Naive thymus-derived CD4-positive, alpha-beta T cell (primary cell): ENCODE measurements at regions of chr2 and their contacts with region 1.

Region 1: GRCh38 chr2:113080134-113080533 is 12.4 kb downstream of the IL1F10 start:
- DNase-seq: peak in 7 of 9 donors; percentile 26 to 55 (median 35)
- ATAC-seq: peak; percentile 69
- H3K4me3 ChIP-seq: no peak overlapping the region
- H3K4me3 Mint-ChIP-seq: no peak overlapping the region
- H3K27ac ChIP-seq: no peak overlapping the region
- H3K27ac Mint-ChIP-seq: no peak overlapping the region
- H3K4me1 ChIP-seq: no peaks in the 10 kb centered on the region
- H3K4me1 Mint-ChIP-seq: peaks cover 2 to 13% (median 4%) of the 10 kb centered on the region in 7 donors
- H3K27me3 ChIP-seq: no peaks in the 10 kb centered on the region
- H3K27me3 Mint-ChIP-seq: peaks cover 0 to 7% (median 0%) of the 10 kb centered on the region in 5 donors

Region 2: DNA sequence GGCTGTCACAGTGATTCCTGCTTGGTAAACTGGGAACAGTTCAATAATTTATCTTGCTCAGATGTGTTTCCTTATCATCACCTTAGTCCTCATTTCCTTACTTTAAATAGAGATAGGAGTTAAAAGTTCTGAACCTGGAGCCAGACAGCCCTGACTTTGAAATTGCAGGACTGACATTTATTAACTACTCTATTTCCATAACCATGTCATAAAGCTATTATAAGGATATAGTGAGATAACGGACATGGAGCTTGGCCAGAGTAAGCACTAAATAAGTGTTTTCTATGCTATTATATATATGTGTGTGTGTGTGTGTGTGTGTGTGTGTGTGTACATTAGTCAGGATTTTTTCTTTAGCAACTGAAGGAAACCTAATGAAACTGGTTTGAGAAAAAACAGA is 346.3 kb before region 1 on chr2:
- CTCF ChIA-PET with region 1: no interaction called
- POLR2A ChIA-PET with region 1: no interaction called
- intact Hi-C with region 1: no loop called
- DNase-seq: no peak
- ATAC-seq: no peak
- H3K4me3 ChIP-seq: no peak overlapping the region
- H3K4me3 Mint-ChIP-seq: no peak overlapping the region
- H3K27ac ChIP-seq: no peak overlapping the region
- H3K27ac Mint-ChIP-seq: no peak overlapping the region
- H3K4me1 ChIP-seq: no peaks in the 10 kb centered on the region
- H3K4me1 Mint-ChIP-seq: peaks cover 0 to 3% (median 0%) of the 10 kb centered on the region in 7 donors
- H3K27me3 ChIP-seq: no peaks in the 10 kb centered on the region
- H3K27me3 Mint-ChIP-seq: no peaks in the 10 kb centered on the region

Region 3: GRCh38 chr2:113117541-113118262 is 37.6 kb after region 1 on chr2:
- CTCF ChIA-PET with region 1: interaction called, 4 read pairs
- POLR2A ChIA-PET with region 1: no interaction called
- intact Hi-C with region 1: loop called in 1 of 2 experiments (anchors 5 kb)
- DNase-seq: peak in 1 of 9 donors; percentile 36
- ATAC-seq: no peak
- H3K4me3 ChIP-seq: no peak overlapping the region
- H3K4me3 Mint-ChIP-seq: no peak overlapping the region
- H3K27ac ChIP-seq: no peak overlapping the region
- H3K27ac Mint-ChIP-seq: peak overlapping the region in 2 of 9 donors; percentile 29 to 52
- H3K4me1 ChIP-seq: peaks cover 7 to 19% of the 10 kb centered on the region in 2 donors
- H3K4me1 Mint-ChIP-seq: peaks cover 0 to 21% (median 6%) of the 10 kb centered on the region in 7 donors
- H3K27me3 ChIP-seq: no peaks in the 10 kb centered on the region
- H3K27me3 Mint-ChIP-seq: peaks cover 0 to 14% (median 0%) of the 10 kb centered on the region in 5 donors

Region 4: GRCh38 chr2:113157118-113157896 is 77.2 kb after region 1 on chr2:
- CTCF ChIA-PET with region 1: no interaction called
- POLR2A ChIA-PET with region 1: no interaction called
- intact Hi-C with region 1: no loop called
- DNase-seq: peak in 8 of 9 donors; percentile 39 to 67 (median 53)
- ATAC-seq: peak; percentile 90
- H3K4me3 ChIP-seq: peak overlapping the region; percentile 81
- H3K4me3 Mint-ChIP-seq: peak overlapping the region; percentile 84 to 94 (median 90)
- H3K27ac ChIP-seq: peak overlapping the region; percentile 74
- H3K27ac Mint-ChIP-seq: peak overlapping the region; percentile 77 to 93 (median 88)
- H3K4me1 ChIP-seq: peaks cover 14 to 20% of the 10 kb centered on the region in 2 donors
- H3K4me1 Mint-ChIP-seq: peaks cover 12 to 34% (median 28%) of the 10 kb centered on the region in 7 donors
- H3K27me3 ChIP-seq: no peaks in the 10 kb centered on the region
- H3K27me3 Mint-ChIP-seq: peaks cover 0 to 11% (median 0%) of the 10 kb centered on the region in 5 donors

Region 5: DNA sequence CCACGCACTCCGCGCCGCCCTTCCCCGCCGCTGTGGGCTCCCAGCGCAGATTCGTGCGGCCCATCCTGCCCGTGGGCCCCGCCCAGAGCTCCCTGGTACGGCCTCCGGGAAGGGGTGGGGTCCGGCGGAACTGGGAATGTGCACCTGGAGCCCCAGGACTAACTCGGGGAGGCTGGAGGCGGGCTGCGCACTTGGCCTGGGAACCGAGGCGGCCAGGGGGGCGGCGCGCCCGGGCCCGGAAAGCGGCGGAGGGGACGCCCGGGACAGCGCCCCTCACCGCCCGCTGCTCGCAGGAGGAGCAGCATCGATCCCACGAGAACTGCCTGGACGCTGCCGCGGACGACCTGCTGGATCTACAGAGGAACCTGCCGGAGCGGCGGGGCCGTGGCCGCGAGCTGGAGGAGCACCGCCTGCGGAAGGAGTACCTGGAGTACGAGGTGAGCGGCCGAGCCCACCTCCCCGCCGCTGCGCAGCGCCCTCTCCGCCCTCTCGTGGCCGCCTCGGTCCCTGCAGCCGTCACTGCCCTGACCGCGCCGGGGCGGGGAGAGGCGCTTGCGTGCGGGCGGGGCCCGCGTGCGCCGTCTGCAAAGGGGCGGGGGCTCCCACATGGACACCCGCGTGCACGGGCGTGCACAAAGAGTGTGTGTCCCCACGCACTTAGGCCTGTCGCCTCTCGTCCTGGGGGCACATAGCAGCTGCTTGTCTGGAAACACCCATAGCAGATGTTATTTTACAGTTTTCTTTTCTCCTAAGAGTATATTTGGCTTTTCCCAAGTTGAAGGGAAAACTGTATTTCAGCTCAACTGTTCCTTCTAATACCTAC is 118.9 kb after region 1 on chr2:
- CTCF ChIA-PET with region 1: interaction called, 8 read pairs
- POLR2A ChIA-PET with region 1: interaction called, 3 read pairs
- intact Hi-C with region 1: loop called (anchors 2 kb)
- DNase-seq: peak; percentile 57 to 86 (median 70)
- ATAC-seq: peak; percentile 88
- H3K4me3 ChIP-seq: no peak overlapping the region
- H3K4me3 Mint-ChIP-seq: no peak overlapping the region
- H3K27ac ChIP-seq: peak overlapping the region; percentile 44
- H3K27ac Mint-ChIP-seq: peak overlapping the region in 5 of 9 donors; percentile 36 to 75 (median 62)
- H3K4me1 ChIP-seq: peaks cover under 1 to 7% of the 10 kb centered on the region in 2 donors
- H3K4me1 Mint-ChIP-seq: peaks cover 3 to 54% (median 9%) of the 10 kb centered on the region in 7 donors
- H3K27me3 ChIP-seq: no peaks in the 10 kb centered on the region
- H3K27me3 Mint-ChIP-seq: no peaks in the 10 kb centered on the region

Region 6: DNA sequence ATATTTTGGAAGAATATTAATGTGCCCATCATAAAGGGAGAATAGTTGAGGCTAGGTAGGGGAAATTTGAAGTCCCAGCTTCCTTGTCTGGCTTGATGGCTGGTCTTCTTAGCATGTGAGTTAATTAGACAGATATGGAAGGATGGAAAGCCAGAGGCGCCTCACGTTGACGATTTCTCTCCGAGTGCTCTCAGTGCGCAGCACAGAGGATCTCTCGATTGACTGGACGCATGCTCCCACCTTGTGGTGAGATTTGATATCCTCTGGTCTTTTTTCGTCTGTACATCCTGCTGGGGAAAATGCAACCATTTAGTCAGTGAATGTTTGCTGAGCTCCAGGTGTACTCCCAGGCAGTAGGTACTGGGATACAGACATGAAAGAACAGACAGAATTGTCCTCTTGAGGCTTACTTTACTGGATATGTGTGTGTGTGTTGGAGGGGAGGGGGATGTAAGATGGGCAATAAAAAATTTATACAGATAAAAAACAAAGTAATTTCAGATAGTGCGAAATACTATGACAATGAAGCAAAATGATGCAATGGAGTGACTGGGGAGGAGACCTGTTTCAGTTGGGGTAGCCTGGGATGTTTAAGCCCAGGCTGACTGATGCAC is 290.5 kb after region 1 on chr2:
- CTCF ChIA-PET with region 1: interaction called, 3 read pairs
- POLR2A ChIA-PET with region 1: no interaction called
- intact Hi-C with region 1: loop called (anchors 1 to 5 kb)
- DNase-seq: peak; percentile 27 to 82 (median 68)
- ATAC-seq: peak; percentile 91
- H3K4me3 ChIP-seq: no peak overlapping the region
- H3K4me3 Mint-ChIP-seq: no peak overlapping the region
- H3K27ac ChIP-seq: no peak overlapping the region
- H3K27ac Mint-ChIP-seq: peak overlapping the region in 3 of 9 donors; percentile 1 to 90 (median 40)
- H3K4me1 ChIP-seq: no peaks in the 10 kb centered on the region
- H3K4me1 Mint-ChIP-seq: peaks cover 0 to 18% (median 6%) of the 10 kb centered on the region in 7 donors
- H3K27me3 ChIP-seq: no peaks in the 10 kb centered on the region
- H3K27me3 Mint-ChIP-seq: peaks cover 0 to 16% (median 6%) of the 10 kb centered on the region in 5 donors